Dendritic cell treated with granulocyte-macrophage colony-stimulating factor and Interleukin-4, amounts not matched to agents 40 ng/mL and 50 ng/mL, for 4 days (primary cell): ENCODE measurements at regions of chr9 and their contacts with region 1.

Region 1: GRCh38 chr9:36023260-36024048 is 13.3 kb upstream of the RECK start:
- H3K4me3 Mint-ChIP-seq: no peak overlapping the region
- H3K27ac Mint-ChIP-seq: no peak overlapping the region
- H3K4me1 Mint-ChIP-seq: no peaks in the 10 kb centered on the region
- H3K27me3 Mint-ChIP-seq: no peaks in the 10 kb centered on the region

Region 2: DNA sequence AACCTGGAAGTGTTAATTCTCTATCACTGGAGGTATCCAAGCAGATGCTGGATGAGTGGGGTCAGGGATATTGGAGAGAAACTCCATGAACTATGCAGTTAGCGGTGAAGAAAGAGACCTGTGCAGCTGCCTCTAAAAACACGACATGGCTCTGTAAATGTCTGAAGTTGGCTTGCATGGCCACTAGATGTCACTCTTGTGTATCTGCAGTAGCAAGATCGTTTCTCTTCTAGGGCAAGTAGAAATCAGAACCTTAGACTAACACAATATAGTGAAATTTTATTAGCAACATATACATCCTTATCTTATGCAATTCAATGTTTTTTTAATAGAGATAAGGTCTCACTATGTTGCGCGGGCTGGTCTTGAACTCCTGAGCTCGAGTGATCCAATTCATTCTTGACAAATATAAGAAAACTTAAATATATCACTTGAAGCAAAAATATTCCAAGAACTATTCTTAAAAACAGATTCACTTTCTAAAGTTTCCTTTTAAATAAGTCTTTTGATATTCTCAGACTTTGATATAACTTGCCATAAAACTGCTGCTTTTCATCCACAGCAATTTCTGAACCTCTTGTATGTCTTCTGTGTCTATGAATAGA is 68.4 kb before region 1 on chr9:
- intact Hi-C with region 1: loop called (anchors 1 kb)
- H3K4me3 Mint-ChIP-seq: no peak overlapping the region
- H3K27ac Mint-ChIP-seq: no peak overlapping the region
- H3K4me1 Mint-ChIP-seq: no peaks in the 10 kb centered on the region
- H3K27me3 Mint-ChIP-seq: peaks cover 29% of the 10 kb centered on the region

Region 3: DNA sequence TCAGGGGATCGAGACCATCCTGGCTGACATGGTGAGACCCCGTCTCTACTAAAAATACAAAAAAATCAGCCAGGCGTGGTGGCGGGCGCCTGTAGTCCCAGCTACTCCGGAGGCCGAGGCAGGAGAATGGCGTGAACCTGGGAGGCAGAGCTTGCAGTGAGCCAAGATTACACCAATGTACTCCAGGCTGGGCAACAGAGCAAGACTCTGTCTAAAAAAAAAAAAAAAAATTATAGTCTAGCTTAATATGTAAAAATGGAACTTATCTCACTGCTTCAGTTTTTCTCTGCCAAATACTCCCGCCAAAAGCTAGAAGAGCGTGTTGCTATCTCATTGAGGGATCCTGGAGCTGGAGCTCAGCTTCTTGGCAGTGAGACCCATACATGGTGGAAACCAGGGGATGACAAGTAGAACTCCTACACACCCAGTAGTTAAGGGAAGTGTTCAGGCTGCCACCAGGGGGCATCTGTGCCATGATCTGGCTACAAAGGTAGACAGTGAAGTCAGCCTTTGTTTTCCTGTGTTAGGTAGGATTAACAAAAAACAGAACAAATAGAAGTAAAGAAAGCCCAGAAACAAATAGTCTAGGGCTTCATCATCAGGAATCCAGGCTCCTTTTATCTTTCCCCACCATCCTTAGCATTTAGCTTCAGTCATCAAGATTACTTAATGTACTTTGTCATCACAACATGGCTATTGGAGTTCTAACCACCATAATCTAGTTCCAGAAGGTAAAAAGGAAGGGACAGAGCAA is 79.5 kb after region 1 on chr9:
- intact Hi-C with region 1: no loop called
- H3K4me3 Mint-ChIP-seq: no peak overlapping the region
- H3K27ac Mint-ChIP-seq: peak overlapping the region; percentile 43
- H3K4me1 Mint-ChIP-seq: peaks cover 8% of the 10 kb centered on the region
- H3K27me3 Mint-ChIP-seq: no peaks in the 10 kb centered on the region